ENCODE measurements at regions of chr18 and their contacts with region 1.

Region 1: GRCh38 chr18:3217948-3218647 is 1.7 kb downstream of the MYOM1 start:
- DNase-seq: no peak
- H3K4me3 Mint-ChIP-seq: no peak overlapping the region
- H3K27ac Mint-ChIP-seq: no peak overlapping the region
- H3K4me1 Mint-ChIP-seq: peaks cover 9% of the 10 kb centered on the region
- H3K27me3 Mint-ChIP-seq: no peaks in the 10 kb centered on the region

Region 2: GRCh38 chr18:2805970-2806943 is 411.8 kb before region 1 on chr18:
- CTCF ChIA-PET with region 1: no interaction called
- intact Hi-C with region 1: no loop called
- DNase-seq: no peak
- H3K4me3 Mint-ChIP-seq: no peak overlapping the region
- H3K27ac Mint-ChIP-seq: peak overlapping the region; percentile 7
- H3K4me1 Mint-ChIP-seq: no peaks in the 10 kb centered on the region
- H3K27me3 Mint-ChIP-seq: no peaks in the 10 kb centered on the region

Region 3: DNA sequence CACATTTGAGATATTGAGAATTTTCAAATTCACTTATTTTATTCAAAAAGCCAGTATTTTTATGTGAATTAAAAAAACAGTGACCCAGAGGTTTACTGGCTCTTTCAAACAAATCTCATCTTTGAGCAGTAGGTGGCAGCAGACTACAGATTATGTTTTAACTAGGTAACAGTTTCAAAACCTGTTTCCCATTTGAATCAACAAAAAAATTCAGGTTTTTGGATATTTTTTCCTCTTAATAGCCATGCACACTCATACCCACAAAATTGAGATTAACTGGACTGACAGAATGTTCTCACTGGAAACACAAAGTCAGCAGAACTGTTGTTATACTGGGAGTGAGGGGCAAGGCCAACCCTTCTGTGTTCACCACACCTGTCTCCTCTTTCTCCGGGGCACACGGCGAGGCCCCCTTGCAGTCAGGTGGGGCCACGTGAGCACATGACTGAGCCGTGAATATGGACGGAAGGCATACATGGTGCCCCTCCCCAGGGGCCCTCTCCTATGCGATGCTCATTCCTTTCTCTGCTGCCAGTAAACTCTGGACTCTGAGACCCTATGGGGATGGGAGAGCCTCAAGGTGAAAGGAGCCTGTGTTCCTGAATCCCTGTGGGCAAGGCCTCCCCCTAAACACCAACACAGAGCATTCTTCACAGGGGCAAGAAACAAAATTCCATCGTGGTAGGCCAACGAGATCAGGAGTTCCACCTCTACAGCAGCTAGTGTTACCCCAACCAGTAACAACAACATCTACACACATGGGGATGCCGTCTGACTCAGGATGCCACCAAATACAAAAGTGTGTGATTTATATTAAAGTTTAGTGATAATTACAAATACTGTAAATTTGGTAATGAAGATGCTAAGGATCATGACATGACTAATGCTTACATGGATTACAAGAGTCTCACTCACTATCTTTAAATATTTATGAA is 285.6 kb before region 1 on chr18:
- CTCF ChIA-PET with region 1: no interaction called
- intact Hi-C with region 1: no loop called
- DNase-seq: peak; percentile 68
- H3K4me3 Mint-ChIP-seq: no peak overlapping the region
- H3K27ac Mint-ChIP-seq: peak overlapping the region; percentile 94
- H3K4me1 Mint-ChIP-seq: peaks cover 35% of the 10 kb centered on the region
- H3K27me3 Mint-ChIP-seq: no peaks in the 10 kb centered on the region

Region 4: GRCh38 chr18:3236458-3236857 is 18.4 kb after region 1 on chr18:
- CTCF ChIA-PET with region 1: no interaction called
- intact Hi-C with region 1: loop called (anchors 2 kb)
- DNase-seq: no peak
- H3K4me3 Mint-ChIP-seq: no peak overlapping the region
- H3K27ac Mint-ChIP-seq: no peak overlapping the region
- H3K4me1 Mint-ChIP-seq: peaks cover 2% of the 10 kb centered on the region
- H3K27me3 Mint-ChIP-seq: no peaks in the 10 kb centered on the region